ENCODE measurements at regions of chr7 and their contacts with region 1.

Region 1: GRCh38 chr7:134646425-134647305 is at the start of gene BPGM:
- DNase-seq: peak; percentile 81 to 100 (median 98)
- ATAC-seq: peak; percentile 97
- H3K4me3 ChIP-seq: peak within 1 kb of the TSS; percentile 88
- H3K4me3 Mint-ChIP-seq: no peak within 1 kb of the TSS
- H3K27ac ChIP-seq: peak within 1 kb of the TSS; percentile 85
- H3K27ac Mint-ChIP-seq: no peak within 1 kb of the TSS
- H3K4me1 ChIP-seq: peaks cover 19 to 35% of the 10 kb centered on the region in 2 donors
- H3K4me1 Mint-ChIP-seq: peaks cover 21 to 45% (median 38%) of the 10 kb centered on the region in 7 donors
- H3K27me3 ChIP-seq: no peaks in the 10 kb centered on the region
- H3K27me3 Mint-ChIP-seq: no peaks in the 10 kb centered on the region
- total RNA-seq, gene BPGM: 12.7 to 19.2 (median 14.2) TPM

Region 2: GRCh38 chr7:134126966-134127848 is 519.5 kb before region 1 on chr7 and contains the start of gene LRGUK:
- CTCF ChIA-PET with region 1: no interaction called
- POLR2A ChIA-PET with region 1: no interaction called
- intact Hi-C with region 1: loop called in 1 of 2 experiments (anchors 2 kb)
- DNase-seq: peak; percentile 55 to 82 (median 77)
- ATAC-seq: peak; percentile 100
- H3K4me3 ChIP-seq: peak within 1 kb of the TSS; percentile 93
- H3K4me3 Mint-ChIP-seq: peak within 1 kb of the TSS; percentile 80 to 96 (median 88)
- H3K27ac ChIP-seq: no peak within 1 kb of the TSS
- H3K27ac Mint-ChIP-seq: peak within 1 kb of the TSS in 3 of 9 donors; percentile 16 to 65 (median 46)
- H3K4me1 ChIP-seq: peaks cover 3 to 9% of the 10 kb centered on the region in 2 donors
- H3K4me1 Mint-ChIP-seq: peaks cover 15 to 26% (median 18%) of the 10 kb centered on the region in 7 donors
- H3K27me3 ChIP-seq: no peaks in the 10 kb centered on the region
- H3K27me3 Mint-ChIP-seq: peaks cover 20 to 44% (median 23%) of the 10 kb centered on the region in 5 donors
- total RNA-seq, gene LRGUK: 0.22 to 1.0 (median 0.43) TPM

Region 3: DNA sequence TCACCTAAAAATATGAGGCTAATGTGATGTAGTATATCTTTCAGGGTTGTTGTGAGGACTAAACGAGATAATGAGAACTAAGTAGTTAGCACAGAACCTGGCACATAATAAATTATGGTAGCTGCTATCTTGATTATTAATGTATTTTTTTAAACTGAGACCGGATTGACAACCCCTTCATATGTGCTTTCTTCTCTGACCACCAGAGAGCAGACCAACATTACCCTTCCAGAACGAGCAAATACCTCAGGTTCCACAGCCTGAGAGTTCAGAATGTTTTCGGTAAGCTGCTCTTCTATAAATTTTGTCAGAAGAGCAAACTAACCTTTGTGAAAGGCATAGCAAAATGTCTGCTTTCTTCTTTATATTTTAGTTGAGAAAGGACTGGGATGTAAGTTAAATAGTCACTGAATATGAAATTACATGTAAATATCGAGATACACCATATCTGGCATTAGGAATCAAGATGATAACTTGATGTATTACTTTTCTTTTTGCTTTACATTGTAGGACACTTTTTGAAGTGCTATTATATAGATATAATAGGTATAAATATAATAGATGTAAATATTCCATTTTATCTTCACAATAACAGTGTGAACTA is 13.6 kb before region 1 on chr7:
- CTCF ChIA-PET with region 1: interaction called, 32 read pairs
- POLR2A ChIA-PET with region 1: interaction called, 115 read pairs
- intact Hi-C with region 1: loop called (anchors 1 kb)
- DNase-seq: peak in 7 of 9 donors; percentile 51 to 75 (median 64)
- ATAC-seq: peak; percentile 89
- H3K4me3 ChIP-seq: no peak overlapping the region
- H3K4me3 Mint-ChIP-seq: no peak overlapping the region
- H3K27ac ChIP-seq: no peak overlapping the region
- H3K27ac Mint-ChIP-seq: peak overlapping the region in 1 of 9 donors; percentile 1
- H3K4me1 ChIP-seq: peaks cover 12% of the 10 kb centered on the region in 2 donors
- H3K4me1 Mint-ChIP-seq: peaks cover 17 to 35% (median 23%) of the 10 kb centered on the region in 7 donors
- H3K27me3 ChIP-seq: peaks cover 0 to 5% of the 10 kb centered on the region in 2 donors
- H3K27me3 Mint-ChIP-seq: peaks cover 6 to 19% (median 12%) of the 10 kb centered on the region in 5 donors

Region 4: GRCh38 chr7:134684165-134684564 is 37.5 kb after region 1 on chr7:
- CTCF ChIA-PET with region 1: interaction called, 4 read pairs
- POLR2A ChIA-PET with region 1: interaction called, 4 read pairs
- intact Hi-C with region 1: loop called in 1 of 2 experiments (anchors 5 kb)
- DNase-seq: no peak
- ATAC-seq: no peak
- H3K4me3 ChIP-seq: no peak overlapping the region
- H3K4me3 Mint-ChIP-seq: no peak overlapping the region
- H3K27ac ChIP-seq: no peak overlapping the region
- H3K27ac Mint-ChIP-seq: no peak overlapping the region
- H3K4me1 ChIP-seq: no peaks in the 10 kb centered on the region
- H3K4me1 Mint-ChIP-seq: peaks cover 0 to 7% (median 0%) of the 10 kb centered on the region in 7 donors
- H3K27me3 ChIP-seq: no peaks in the 10 kb centered on the region
- H3K27me3 Mint-ChIP-seq: peaks cover 0 to 3% (median 0%) of the 10 kb centered on the region in 5 donors

Region 5: GRCh38 chr7:134865001-134865845 is 218.6 kb after region 1 on chr7:
- CTCF ChIA-PET with region 1: no interaction called
- POLR2A ChIA-PET with region 1: interaction called, 11 read pairs
- intact Hi-C with region 1: loop called (anchors 1 to 5 kb)
- DNase-seq: peak in 8 of 9 donors; percentile 43 to 79 (median 76)
- ATAC-seq: peak; percentile 91
- H3K4me3 ChIP-seq: peak overlapping the region; percentile 51
- H3K4me3 Mint-ChIP-seq: peak overlapping the region; percentile 64 to 90 (median 84)
- H3K27ac ChIP-seq: peak overlapping the region; percentile 68
- H3K27ac Mint-ChIP-seq: peak overlapping the region; percentile 88 to 96 (median 92)
- H3K4me1 ChIP-seq: peaks cover 0 to 13% of the 10 kb centered on the region in 2 donors
- H3K4me1 Mint-ChIP-seq: peaks cover 8 to 76% (median 58%) of the 10 kb centered on the region in 7 donors
- H3K27me3 ChIP-seq: no peaks in the 10 kb centered on the region
- H3K27me3 Mint-ChIP-seq: no peaks in the 10 kb centered on the region

Region 6: DNA sequence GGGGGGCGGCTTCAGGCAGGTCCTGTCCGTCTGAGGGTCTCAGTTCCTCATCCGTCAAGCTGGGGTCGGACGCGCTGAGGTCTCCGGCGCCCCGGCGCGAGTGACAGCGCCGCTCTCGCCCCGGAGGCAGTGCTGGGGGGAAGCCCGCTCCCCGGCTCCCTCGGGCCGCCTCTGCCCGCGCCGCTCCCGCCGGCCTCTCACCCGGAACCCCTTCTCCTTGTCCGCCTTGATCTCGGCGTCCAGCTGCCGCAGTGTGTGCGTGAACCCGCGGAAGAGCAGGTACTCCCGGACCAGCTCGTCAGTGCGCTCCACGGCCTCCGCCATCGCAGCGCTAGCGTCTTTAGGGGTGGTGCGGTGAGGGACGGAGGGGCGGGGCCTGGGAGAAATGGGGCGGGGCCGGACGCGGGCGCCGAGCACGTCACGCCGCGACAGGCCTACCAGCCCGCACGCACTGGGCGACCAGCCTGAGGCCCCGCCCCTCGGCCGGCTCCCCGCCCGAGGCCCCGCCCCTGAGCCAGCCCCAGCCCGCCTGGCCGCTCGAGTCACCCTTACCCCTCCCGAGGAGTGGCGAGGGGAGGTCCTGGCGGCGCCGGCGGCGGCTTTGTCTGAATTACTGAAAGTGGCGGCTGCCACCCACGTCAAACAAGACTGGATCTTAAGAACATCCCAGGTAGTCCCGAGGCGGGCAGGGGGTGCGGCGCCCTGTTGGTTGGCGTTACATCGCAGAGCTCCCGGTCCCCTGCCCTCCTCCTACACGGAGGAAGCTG is 564.7 kb after region 1 on chr7 and contains the start of gene WDR91:
- CTCF ChIA-PET with region 1: no interaction called
- POLR2A ChIA-PET with region 1: interaction called, 10 read pairs
- intact Hi-C with region 1: loop called (anchors 1 to 2 kb)
- DNase-seq: peak; percentile 83 to 94 (median 90)
- ATAC-seq: peak; percentile 97
- H3K4me3 ChIP-seq: peak within 1 kb of the TSS; percentile 68
- H3K4me3 Mint-ChIP-seq: peak within 1 kb of the TSS; percentile 91 to 99 (median 96)
- H3K27ac ChIP-seq: peak within 1 kb of the TSS; percentile 92
- H3K27ac Mint-ChIP-seq: peak within 1 kb of the TSS; percentile 94 to 99 (median 98)
- H3K4me1 ChIP-seq: peaks cover 0 to 5% of the 10 kb centered on the region in 2 donors
- H3K4me1 Mint-ChIP-seq: peaks cover 18 to 47% (median 37%) of the 10 kb centered on the region in 7 donors
- H3K27me3 ChIP-seq: no peaks in the 10 kb centered on the region
- H3K27me3 Mint-ChIP-seq: peaks cover 0 to 2% (median 0%) of the 10 kb centered on the region in 5 donors
- total RNA-seq, gene WDR91: 18.2 to 59.2 (median 37.0) TPM

Measured in naive thymus-derived CD4-positive, alpha-beta T cell (primary cell).